Activated CD4-positive, alpha-beta T cell treated with anti-CD3 and anti-CD28 coated beads for 36 hours (primary cell): ENCODE measurements at regions of chr16 and their contacts with region 1.

Region 1: DNA sequence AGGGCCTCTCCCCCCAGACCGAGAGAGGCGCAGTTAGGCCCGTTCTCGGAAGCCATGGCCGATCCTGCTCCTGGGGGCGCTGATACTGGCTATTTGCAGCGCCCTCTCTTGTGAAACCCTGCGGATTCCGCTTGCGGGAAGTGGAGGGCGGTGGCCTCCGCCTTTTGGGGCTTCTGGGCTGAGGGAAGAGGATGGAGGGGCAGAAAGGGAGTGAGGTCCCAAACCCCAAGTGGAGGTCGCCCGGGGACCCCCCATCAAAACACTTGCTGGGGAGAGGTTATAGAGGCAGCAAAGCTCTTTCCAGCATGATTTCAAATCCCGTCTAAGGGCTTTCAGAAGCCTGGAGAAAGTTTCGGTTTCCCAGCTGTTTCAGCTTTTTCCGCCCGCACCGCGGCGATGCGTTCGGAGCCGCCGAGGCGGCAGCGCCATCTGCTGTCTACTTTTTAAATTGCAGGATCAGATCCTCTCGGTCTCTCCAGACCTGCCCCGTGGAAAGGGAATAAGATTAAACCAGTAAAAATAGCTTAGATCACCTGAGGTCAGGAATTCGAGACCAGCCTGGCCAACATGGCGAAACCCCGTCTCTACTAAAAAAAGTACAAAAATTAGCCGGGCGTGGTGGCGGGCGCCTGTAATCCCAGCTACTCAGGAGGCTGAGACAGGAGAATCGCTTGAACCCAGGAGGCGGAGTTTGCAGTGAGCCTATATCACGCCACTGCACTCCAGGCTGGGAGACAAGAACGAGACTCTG is 15.8 kb downstream of the SNX20 start:
- DNase-seq: peak; percentile 90
- ATAC-seq: peak; percentile 43
- H3K4me3 Mint-ChIP-seq: peak overlapping the region; percentile 60
- H3K27ac Mint-ChIP-seq: peak overlapping the region; percentile 79
- H3K4me1 Mint-ChIP-seq: peaks cover 37% of the 10 kb centered on the region
- H3K27me3 Mint-ChIP-seq: no peaks in the 10 kb centered on the region

Region 2: GRCh38 chr16:50326949-50327402 is 338.3 kb before region 1 on chr16:
- CTCF ChIA-PET with region 1: interaction called, 44 read pairs
- POLR2A ChIA-PET with region 1: no interaction called
- intact Hi-C with region 1: loop called (anchors 1 to 2 kb)
- DNase-seq: peak; percentile 81
- ATAC-seq: peak; percentile 92
- H3K4me3 Mint-ChIP-seq: no peak overlapping the region
- H3K27ac Mint-ChIP-seq: peak overlapping the region; percentile 82
- H3K4me1 Mint-ChIP-seq: peaks cover 58% of the 10 kb centered on the region
- H3K27me3 Mint-ChIP-seq: no peaks in the 10 kb centered on the region

Region 3: GRCh38 chr16:50368410-50369132 is 296.7 kb before region 1 on chr16 and contains the start of gene BRD7:
- CTCF ChIA-PET with region 1: interaction called, 14 read pairs
- POLR2A ChIA-PET with region 1: interaction called, 4 read pairs
- intact Hi-C with region 1: loop called (anchors 1 to 5 kb)
- DNase-seq: peak; percentile 82
- ATAC-seq: peak; percentile 73
- H3K4me3 Mint-ChIP-seq: peak within 1 kb of the TSS; percentile 89
- H3K27ac Mint-ChIP-seq: peak within 1 kb of the TSS; percentile 86
- H3K4me1 Mint-ChIP-seq: peaks cover 41% of the 10 kb centered on the region
- H3K27me3 Mint-ChIP-seq: no peaks in the 10 kb centered on the region
- total RNA-seq, gene BRD7: 87.7 to 104 TPM

Region 4: GRCh38 chr16:50464325-50465290 is 200.7 kb before region 1 on chr16:
- CTCF ChIA-PET with region 1: no interaction called
- POLR2A ChIA-PET with region 1: no interaction called
- intact Hi-C with region 1: no loop called
- DNase-seq: no peak
- ATAC-seq: no peak
- H3K4me3 Mint-ChIP-seq: no peak overlapping the region
- H3K27ac Mint-ChIP-seq: no peak overlapping the region
- H3K4me1 Mint-ChIP-seq: peaks cover 8% of the 10 kb centered on the region
- H3K27me3 Mint-ChIP-seq: peaks cover 8% of the 10 kb centered on the region

Region 5: DNA sequence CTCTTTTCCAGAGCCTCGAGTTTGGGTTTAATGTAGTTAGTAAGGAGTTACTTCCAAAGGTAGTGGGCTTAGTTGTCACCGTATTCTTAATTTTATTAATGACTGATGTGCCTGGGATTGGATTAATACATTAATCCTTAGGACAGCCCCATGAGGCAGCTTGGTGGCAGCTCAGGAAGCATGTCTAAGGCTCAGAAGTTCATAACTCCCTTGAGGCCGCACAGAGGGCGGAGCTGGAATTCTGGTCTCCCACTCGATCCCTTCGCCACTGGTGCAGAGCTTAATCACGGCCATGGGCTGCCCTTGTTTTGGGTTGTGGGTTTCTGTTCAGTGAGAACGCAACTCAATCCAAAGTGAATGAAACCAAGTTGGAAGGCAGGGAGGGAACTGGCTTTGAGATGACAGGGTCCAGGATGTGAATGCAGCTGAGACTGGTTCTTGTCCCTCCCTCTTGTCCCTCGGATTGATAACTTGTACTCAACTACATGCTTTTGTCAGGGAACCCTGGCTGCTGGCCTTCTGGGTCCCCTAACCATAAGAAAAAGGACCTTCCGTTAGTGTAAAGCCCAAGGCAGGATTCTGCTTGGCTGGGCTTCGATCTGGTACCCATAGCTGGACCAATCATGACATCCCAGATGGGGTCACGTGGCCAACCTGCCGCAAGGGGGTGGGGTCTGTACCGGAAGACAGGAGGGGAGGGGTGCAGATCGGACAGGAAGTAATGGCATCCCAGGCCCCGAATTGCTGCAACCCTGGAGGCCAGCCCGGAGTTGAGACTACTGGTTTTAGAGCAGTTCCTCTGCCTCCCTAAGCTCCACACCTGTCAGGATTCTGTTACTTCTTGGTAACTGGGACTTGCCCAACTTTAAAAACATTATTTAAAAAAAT is 29.6 kb before region 1 on chr16:
- CTCF ChIA-PET with region 1: interaction called, 10 read pairs
- POLR2A ChIA-PET with region 1: interaction called, 3 read pairs
- intact Hi-C with region 1: no loop called
- DNase-seq: peak; percentile 64
- ATAC-seq: peak; percentile 82
- H3K4me3 Mint-ChIP-seq: no peak overlapping the region
- H3K27ac Mint-ChIP-seq: peak overlapping the region; percentile 4
- H3K4me1 Mint-ChIP-seq: peaks cover 3% of the 10 kb centered on the region
- H3K27me3 Mint-ChIP-seq: no peaks in the 10 kb centered on the region

Region 6: DNA sequence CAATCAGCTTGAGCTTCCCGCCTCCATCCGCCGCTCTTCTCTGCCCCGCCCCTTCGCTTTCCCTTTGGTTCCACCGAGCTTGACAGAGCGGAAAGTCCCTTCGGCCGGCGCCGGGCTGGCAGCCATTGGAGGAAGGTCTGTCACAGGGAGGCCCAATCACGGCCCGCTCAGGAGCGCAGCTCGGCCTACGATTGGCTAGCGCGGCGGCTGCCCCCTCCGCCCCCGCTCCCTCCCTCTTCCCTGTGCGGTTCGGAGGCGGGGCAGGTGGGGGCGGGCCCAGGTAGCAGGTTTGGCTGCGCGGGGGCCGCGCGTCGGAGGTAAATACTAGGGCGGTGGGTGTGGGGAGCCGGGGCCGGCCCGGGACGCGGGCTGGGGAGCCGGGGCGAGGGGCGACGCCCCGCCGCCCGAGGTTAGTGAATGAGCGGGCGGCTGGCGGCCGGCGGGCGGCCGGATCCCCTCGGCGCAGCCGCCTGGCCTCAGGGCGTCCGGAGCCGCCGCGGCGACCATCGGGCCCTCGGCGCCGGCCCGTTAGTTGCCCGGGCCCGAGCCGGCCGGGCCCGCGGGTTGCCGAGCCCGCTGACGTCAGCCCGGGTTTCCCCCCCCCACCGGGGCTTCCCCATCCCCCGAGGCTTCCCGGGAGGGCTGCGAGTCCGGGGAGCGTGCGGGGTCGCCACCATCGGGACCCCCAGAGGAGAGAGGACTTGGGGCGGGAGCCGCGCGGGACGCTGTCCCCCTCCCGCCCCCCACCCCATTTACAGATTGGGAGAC is 76.7 kb after region 1 on chr16 and contains the start of gene CYLD:
- CTCF ChIA-PET with region 1: interaction called, 298 read pairs
- POLR2A ChIA-PET with region 1: interaction called, 6 read pairs
- intact Hi-C with region 1: loop called (anchors 1 kb)
- DNase-seq: peak; percentile 100
- ATAC-seq: peak; percentile 91
- H3K4me3 Mint-ChIP-seq: peak within 1 kb of the TSS; percentile 93
- H3K27ac Mint-ChIP-seq: peak within 1 kb of the TSS; percentile 95
- H3K4me1 Mint-ChIP-seq: peaks cover 42% of the 10 kb centered on the region
- H3K27me3 Mint-ChIP-seq: no peaks in the 10 kb centered on the region
- total RNA-seq, gene CYLD: 72.4 to 92.8 TPM